ENCODE measurements at regions of chr1 and their contacts with region 1.

Region 1: GRCh38 chr1:111197598-111198284 is 2.7 kb downstream of the DENND2D start:
- DNase-seq: peak in 7 of 9 donors; percentile 57 to 84 (median 78)
- ATAC-seq: peak; percentile 61
- H3K4me3 ChIP-seq: peak overlapping the region; percentile 84
- H3K4me3 Mint-ChIP-seq: peak overlapping the region; percentile 90 to 100 (median 99)
- H3K27ac ChIP-seq: peak overlapping the region; percentile 90
- H3K27ac Mint-ChIP-seq: peak overlapping the region; percentile 92 to 99 (median 96)
- H3K4me1 ChIP-seq: peaks cover 57 to 66% of the 10 kb centered on the region in 2 donors
- H3K4me1 Mint-ChIP-seq: peaks cover 47 to 75% (median 66%) of the 10 kb centered on the region in 7 donors
- H3K27me3 ChIP-seq: no peaks in the 10 kb centered on the region
- H3K27me3 Mint-ChIP-seq: no peaks in the 10 kb centered on the region

Region 2: GRCh38 chr1:111030590-111030989 is 167.2 kb before region 1 on chr1:
- CTCF ChIA-PET with region 1: interaction called, 4 read pairs
- POLR2A ChIA-PET with region 1: no interaction called
- intact Hi-C with region 1: loop called in 1 of 2 experiments (anchors 10 kb)
- DNase-seq: peak in 8 of 9 donors; percentile 20 to 69 (median 56)
- ATAC-seq: peak; percentile 66
- H3K4me3 ChIP-seq: no peak overlapping the region
- H3K4me3 Mint-ChIP-seq: no peak overlapping the region
- H3K27ac ChIP-seq: no peak overlapping the region
- H3K27ac Mint-ChIP-seq: peak overlapping the region in 2 of 9 donors; percentile 3 to 22
- H3K4me1 ChIP-seq: no peaks in the 10 kb centered on the region
- H3K4me1 Mint-ChIP-seq: peaks cover 0 to 5% (median 0%) of the 10 kb centered on the region in 7 donors
- H3K27me3 ChIP-seq: no peaks in the 10 kb centered on the region
- H3K27me3 Mint-ChIP-seq: peaks cover 0 to 28% (median 13%) of the 10 kb centered on the region in 5 donors

Region 3: GRCh38 chr1:111099289-111099688 is 98.5 kb before region 1 on chr1:
- CTCF ChIA-PET with region 1: no interaction called
- POLR2A ChIA-PET with region 1: no interaction called
- intact Hi-C with region 1: no loop called
- DNase-seq: no peak
- ATAC-seq: no peak
- H3K4me3 ChIP-seq: no peak overlapping the region
- H3K4me3 Mint-ChIP-seq: no peak overlapping the region
- H3K27ac ChIP-seq: no peak overlapping the region
- H3K27ac Mint-ChIP-seq: no peak overlapping the region
- H3K4me1 ChIP-seq: no peaks in the 10 kb centered on the region
- H3K4me1 Mint-ChIP-seq: peaks cover 0 to 4% (median 0%) of the 10 kb centered on the region in 7 donors
- H3K27me3 ChIP-seq: no peaks in the 10 kb centered on the region
- H3K27me3 Mint-ChIP-seq: peaks cover 0 to 10% (median 0%) of the 10 kb centered on the region in 5 donors

Region 4: GRCh38 chr1:111183308-111184069 is 14.3 kb before region 1 on chr1:
- CTCF ChIA-PET with region 1: interaction called, 5 read pairs
- POLR2A ChIA-PET with region 1: interaction called, 248 read pairs
- intact Hi-C with region 1: loop called (anchors 1 to 2 kb)
- DNase-seq: no peak
- ATAC-seq: no peak
- H3K4me3 ChIP-seq: no peak overlapping the region
- H3K4me3 Mint-ChIP-seq: no peak overlapping the region
- H3K27ac ChIP-seq: peak overlapping the region; percentile 31
- H3K27ac Mint-ChIP-seq: peak overlapping the region in 8 of 9 donors; percentile 17 to 99 (median 78)
- H3K4me1 ChIP-seq: peaks cover 7 to 43% of the 10 kb centered on the region in 2 donors
- H3K4me1 Mint-ChIP-seq: peaks cover 53 to 98% (median 91%) of the 10 kb centered on the region in 7 donors
- H3K27me3 ChIP-seq: no peaks in the 10 kb centered on the region
- H3K27me3 Mint-ChIP-seq: no peaks in the 10 kb centered on the region

Region 5: GRCh38 chr1:111214074-111214801 is 16.5 kb after region 1 on chr1:
- CTCF ChIA-PET with region 1: interaction called, 341 read pairs
- POLR2A ChIA-PET with region 1: interaction called, 1,128 read pairs
- intact Hi-C with region 1: loop called in 1 of 2 experiments (anchors 1 kb)
- DNase-seq: no peak
- ATAC-seq: no peak
- H3K4me3 ChIP-seq: peak overlapping the region; percentile 12
- H3K4me3 Mint-ChIP-seq: peak overlapping the region; percentile 60 to 88 (median 81)
- H3K27ac ChIP-seq: peak overlapping the region; percentile 75
- H3K27ac Mint-ChIP-seq: peak overlapping the region; percentile 94 to 100 (median 97)
- H3K4me1 ChIP-seq: peaks cover 65 to 67% of the 10 kb centered on the region in 2 donors
- H3K4me1 Mint-ChIP-seq: peaks cover 66 to 98% (median 93%) of the 10 kb centered on the region in 7 donors
- H3K27me3 ChIP-seq: no peaks in the 10 kb centered on the region
- H3K27me3 Mint-ChIP-seq: peaks cover 0 to 2% (median 0%) of the 10 kb centered on the region in 5 donors

Region 6: GRCh38 chr1:111281411-111281810 is 83.7 kb after region 1 on chr1:
- CTCF ChIA-PET with region 1: no interaction called
- POLR2A ChIA-PET with region 1: no interaction called
- intact Hi-C with region 1: no loop called
- DNase-seq: no peak
- ATAC-seq: no peak
- H3K4me3 ChIP-seq: no peak overlapping the region
- H3K4me3 Mint-ChIP-seq: no peak overlapping the region
- H3K27ac ChIP-seq: no peak overlapping the region
- H3K27ac Mint-ChIP-seq: no peak overlapping the region
- H3K4me1 ChIP-seq: no peaks in the 10 kb centered on the region
- H3K4me1 Mint-ChIP-seq: peaks cover 0 to 6% (median 0%) of the 10 kb centered on the region in 7 donors
- H3K27me3 ChIP-seq: no peaks in the 10 kb centered on the region
- H3K27me3 Mint-ChIP-seq: peaks cover 0 to 5% (median 0%) of the 10 kb centered on the region in 5 donors

Region 7: GRCh38 chr1:111441573-111442192 is 243.9 kb after region 1 on chr1:
- CTCF ChIA-PET with region 1: interaction called, 5 read pairs
- POLR2A ChIA-PET with region 1: no interaction called
- intact Hi-C with region 1: loop called in 1 of 2 experiments (anchors 2 kb)
- DNase-seq: peak; percentile 44 to 75 (median 67)
- ATAC-seq: peak; percentile 95
- H3K4me3 ChIP-seq: no peak overlapping the region
- H3K4me3 Mint-ChIP-seq: no peak overlapping the region
- H3K27ac ChIP-seq: peak overlapping the region; percentile 47
- H3K27ac Mint-ChIP-seq: peak overlapping the region in 8 of 9 donors; percentile 49 to 90 (median 84)
- H3K4me1 ChIP-seq: peaks cover 4 to 7% of the 10 kb centered on the region in 2 donors
- H3K4me1 Mint-ChIP-seq: peaks cover 8 to 49% (median 34%) of the 10 kb centered on the region in 7 donors
- H3K27me3 ChIP-seq: no peaks in the 10 kb centered on the region
- H3K27me3 Mint-ChIP-seq: no peaks in the 10 kb centered on the region